CD4-positive, alpha-beta memory T cell (primary cell): ENCODE measurements at regions of chr6 and their contacts with region 1.

Region 1: DNA sequence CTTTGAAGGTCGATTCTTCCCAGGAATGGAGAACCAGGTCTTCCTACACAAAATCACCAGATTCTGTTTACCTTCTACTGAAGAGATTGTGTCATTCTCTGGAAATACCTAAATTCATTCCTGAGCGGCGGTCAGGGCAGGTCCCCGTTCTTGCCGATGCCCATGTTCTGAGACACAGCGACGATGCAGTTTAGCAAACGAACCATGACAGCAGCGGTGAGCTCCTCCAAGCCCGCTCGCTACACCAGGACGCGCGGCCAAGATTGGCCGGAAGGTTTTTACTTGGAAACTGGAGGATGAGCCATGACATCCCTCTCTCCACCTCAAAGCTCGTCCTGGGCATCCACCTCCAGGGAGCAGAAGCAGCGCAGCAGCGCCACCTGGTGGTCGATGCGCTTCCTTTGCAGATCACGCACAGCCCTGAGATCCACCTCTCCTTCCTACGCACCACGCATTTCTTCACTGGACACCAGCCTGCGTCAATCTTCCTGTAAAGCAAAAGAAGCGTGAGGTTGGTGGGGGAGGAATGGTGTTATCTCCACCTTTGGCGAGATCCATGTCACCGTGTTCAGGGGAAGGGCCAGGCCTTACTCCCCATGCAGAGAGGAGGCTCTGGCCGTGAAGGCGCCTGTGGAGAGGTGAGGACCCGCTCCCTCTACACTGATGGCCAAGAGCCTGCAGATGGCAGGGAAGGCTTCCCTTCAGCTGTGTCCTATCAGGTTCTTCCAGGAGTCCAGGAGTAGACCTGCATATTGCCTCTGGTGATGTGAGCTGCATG is 9.9 kb upstream of the HLA-B start:
- DNase-seq: peak; percentile 81 to 88 (median 85)
- H3K4me3 ChIP-seq: peak overlapping the region; percentile 30 to 67
- H3K4me3 Mint-ChIP-seq: peak overlapping the region; percentile 77 to 87 (median 86)
- H3K27ac ChIP-seq: peak overlapping the region; percentile 18
- H3K27ac Mint-ChIP-seq: peak overlapping the region; percentile 9 to 88 (median 77)
- H3K4me1 ChIP-seq: peaks cover 10% of the 10 kb centered on the region
- H3K4me1 Mint-ChIP-seq: peaks cover 10 to 16% (median 12%) of the 10 kb centered on the region in 4 donors
- H3K27me3 ChIP-seq: peaks cover 13% of the 10 kb centered on the region
- H3K27me3 Mint-ChIP-seq: peaks cover 9 to 12% of the 10 kb centered on the region in 2 donors

Region 2: GRCh38 chr6:31114970-31115849 is 251.7 kb before region 1 on chr6:
- CTCF ChIA-PET with region 1: no interaction called
- POLR2A ChIA-PET with region 1: no interaction called
- intact Hi-C with region 1: no loop called
- DNase-seq: peak in 1 of 5 donors; percentile 40
- H3K4me3 ChIP-seq: no peak overlapping the region
- H3K4me3 Mint-ChIP-seq: peak overlapping the region in 2 of 8 donors; percentile 16 to 41
- H3K27ac ChIP-seq: no peak overlapping the region
- H3K27ac Mint-ChIP-seq: peak overlapping the region in 4 of 7 donors; percentile 12 to 80 (median 46)
- H3K4me1 ChIP-seq: peaks cover 5% of the 10 kb centered on the region
- H3K4me1 Mint-ChIP-seq: peaks cover 2 to 8% (median 5%) of the 10 kb centered on the region in 4 donors
- H3K27me3 ChIP-seq: no peaks in the 10 kb centered on the region
- H3K27me3 Mint-ChIP-seq: peaks cover 2 to 3% of the 10 kb centered on the region in 2 donors

Region 3: DNA sequence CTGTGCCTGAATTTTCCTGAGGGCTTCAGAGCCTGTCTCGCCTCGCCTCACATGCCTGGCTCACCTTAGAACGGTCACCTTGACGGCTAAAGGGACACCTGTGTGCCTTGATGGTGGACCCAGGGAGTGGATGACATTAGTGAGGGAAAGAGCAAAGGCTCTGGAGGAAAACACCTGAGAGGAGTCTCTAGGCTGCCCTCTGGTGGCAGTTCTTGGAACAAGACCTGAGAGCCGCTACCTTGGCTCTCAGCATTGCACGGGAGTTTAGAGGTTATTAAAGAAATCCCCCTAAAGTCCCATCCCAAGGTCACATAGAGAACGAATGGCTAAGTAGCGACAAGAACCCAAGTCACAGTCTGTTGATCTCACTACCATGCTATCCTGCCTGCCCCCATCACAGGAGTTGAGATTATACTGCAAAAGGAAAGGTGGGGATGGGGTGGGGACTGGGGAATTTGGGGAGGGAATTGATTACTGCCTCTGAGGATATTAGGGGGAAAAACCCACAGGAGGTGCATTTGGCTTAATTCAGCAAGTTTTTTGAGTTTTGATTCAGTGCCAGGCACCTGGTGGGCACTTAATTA is 238.7 kb before region 1 on chr6:
- CTCF ChIA-PET with region 1: interaction called, 56 read pairs
- POLR2A ChIA-PET with region 1: no interaction called
- intact Hi-C with region 1: no loop called
- DNase-seq: peak; percentile 57 to 70 (median 62)
- H3K4me3 ChIP-seq: no peak overlapping the region
- H3K4me3 Mint-ChIP-seq: no peak overlapping the region
- H3K27ac ChIP-seq: no peak overlapping the region
- H3K27ac Mint-ChIP-seq: peak overlapping the region in 3 of 7 donors; percentile 7 to 52 (median 24)
- H3K4me1 ChIP-seq: peaks cover 3% of the 10 kb centered on the region
- H3K4me1 Mint-ChIP-seq: peaks cover 2 to 8% (median 7%) of the 10 kb centered on the region in 4 donors
- H3K27me3 ChIP-seq: no peaks in the 10 kb centered on the region
- H3K27me3 Mint-ChIP-seq: peaks cover 3 to 6% of the 10 kb centered on the region in 2 donors

Region 4: GRCh38 chr6:31158140-31158862 is 208.6 kb before region 1 on chr6 and contains the start of gene TCF19:
- CTCF ChIA-PET with region 1: interaction called, 13 read pairs
- POLR2A ChIA-PET with region 1: interaction called, 7 read pairs
- intact Hi-C with region 1: no loop called
- DNase-seq: peak; percentile 98 to 99 (median 98)
- H3K4me3 ChIP-seq: peak within 1 kb of the TSS; percentile 59 to 70
- H3K4me3 Mint-ChIP-seq: peak within 1 kb of the TSS; percentile 87 to 95 (median 90)
- H3K27ac ChIP-seq: peak within 1 kb of the TSS; percentile 69
- H3K27ac Mint-ChIP-seq: peak within 1 kb of the TSS; percentile 75 to 95 (median 93)
- H3K4me1 ChIP-seq: peaks cover 22% of the 10 kb centered on the region
- H3K4me1 Mint-ChIP-seq: peaks cover 14 to 34% (median 24%) of the 10 kb centered on the region in 4 donors
- H3K27me3 ChIP-seq: no peaks in the 10 kb centered on the region
- H3K27me3 Mint-ChIP-seq: no peaks in the 10 kb centered on the region
- total RNA-seq, gene TCF19: 9.0 to 9.9 TPM

Region 5: DNA sequence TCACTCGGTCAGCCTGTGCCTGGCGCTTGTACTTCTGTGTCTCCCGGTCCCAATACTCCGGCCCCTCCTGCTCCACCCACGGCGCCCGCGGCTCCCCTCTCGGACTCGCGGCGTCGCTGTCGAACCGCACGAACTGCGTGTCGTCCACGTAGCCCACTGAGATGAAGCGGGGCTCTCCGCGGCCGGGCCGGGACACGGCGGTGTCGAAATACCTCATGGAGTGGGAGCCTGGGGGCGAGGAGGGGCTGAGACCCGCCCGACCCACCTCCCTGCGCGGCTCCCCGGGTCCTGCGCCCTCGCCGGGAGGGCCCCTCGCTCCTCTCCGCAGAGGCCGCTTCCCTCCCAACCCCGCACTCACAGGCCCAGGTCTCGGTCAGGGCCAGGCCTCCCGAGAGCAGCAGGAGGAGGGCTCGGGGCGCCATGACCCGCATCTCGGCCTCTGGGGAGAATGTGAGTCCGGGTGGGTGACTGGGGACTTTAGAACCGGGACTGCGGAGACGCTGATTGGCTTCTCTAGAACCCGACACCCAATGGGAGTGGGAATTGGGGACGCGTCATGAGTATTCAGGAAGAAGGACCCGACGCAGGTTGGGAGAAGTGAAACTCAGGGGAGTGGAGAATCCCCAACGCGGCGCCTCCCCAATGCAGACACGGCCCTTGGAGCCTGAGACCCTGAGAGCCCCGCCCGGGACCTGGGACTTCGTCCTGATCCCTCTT is 95.1 kb before region 1 on chr6 and contains the start of gene HLA-C:
- CTCF ChIA-PET with region 1: interaction called, 6 read pairs
- POLR2A ChIA-PET with region 1: interaction called, 14 read pairs
- intact Hi-C with region 1: loop called (anchors 1 kb)
- DNase-seq: peak; percentile 92 to 98 (median 93)
- H3K4me3 ChIP-seq: peak within 1 kb of the TSS; percentile 88 to 94
- H3K4me3 Mint-ChIP-seq: peak within 1 kb of the TSS; percentile 95 to 100 (median 98)
- H3K27ac ChIP-seq: peak within 1 kb of the TSS; percentile 100
- H3K27ac Mint-ChIP-seq: peak within 1 kb of the TSS; percentile 99 to 100 (median 100)
- H3K4me1 ChIP-seq: peaks cover 51% of the 10 kb centered on the region
- H3K4me1 Mint-ChIP-seq: peaks cover 45 to 77% (median 54%) of the 10 kb centered on the region in 4 donors
- H3K27me3 ChIP-seq: no peaks in the 10 kb centered on the region
- H3K27me3 Mint-ChIP-seq: peaks cover 0 to 2% of the 10 kb centered on the region in 2 donors
- total RNA-seq, gene HLA-C: 1,481 to 1,487 TPM

Region 6: DNA sequence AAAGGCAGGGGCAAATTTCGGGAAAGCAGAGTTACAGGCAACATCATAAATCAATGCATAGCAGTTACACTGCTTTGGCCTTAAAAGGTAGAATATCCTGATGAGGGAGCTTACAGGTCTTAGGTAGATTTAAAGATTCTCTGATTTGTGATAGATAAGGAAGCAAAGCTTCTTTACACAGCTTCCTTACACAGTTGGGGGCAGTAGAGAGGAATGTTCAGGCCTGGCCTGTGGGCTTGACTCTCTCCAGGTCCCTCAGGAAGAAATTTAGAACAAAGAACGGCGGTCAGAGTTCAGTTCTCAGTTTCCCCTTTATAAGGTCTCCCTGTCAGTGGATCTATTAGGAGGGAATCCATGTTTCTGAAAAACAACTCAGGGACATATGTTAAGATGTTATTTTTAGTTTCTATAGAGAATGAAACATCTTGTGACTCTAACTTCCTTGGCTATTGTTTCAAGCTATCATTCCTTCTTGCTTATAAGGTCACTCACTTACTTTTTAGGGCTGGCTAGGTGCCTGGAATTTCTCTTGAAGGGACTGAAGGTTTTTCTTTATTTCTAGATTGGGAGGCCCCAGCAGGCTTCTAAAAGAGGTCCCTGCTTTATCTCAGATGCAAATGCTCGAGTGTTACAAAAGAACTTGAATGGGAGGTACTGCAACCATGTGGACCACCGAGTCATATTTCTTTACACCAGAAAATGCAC is 21.7 kb before region 1 on chr6:
- CTCF ChIA-PET with region 1: interaction called, 10 read pairs
- POLR2A ChIA-PET with region 1: interaction called, 5 read pairs
- intact Hi-C with region 1: no loop called
- DNase-seq: no peak
- H3K4me3 ChIP-seq: no peak overlapping the region
- H3K4me3 Mint-ChIP-seq: no peak overlapping the region
- H3K27ac ChIP-seq: no peak overlapping the region
- H3K27ac Mint-ChIP-seq: no peak overlapping the region
- H3K4me1 ChIP-seq: peaks cover 6% of the 10 kb centered on the region
- H3K4me1 Mint-ChIP-seq: peaks cover 10 to 24% (median 18%) of the 10 kb centered on the region in 4 donors
- H3K27me3 ChIP-seq: no peaks in the 10 kb centered on the region
- H3K27me3 Mint-ChIP-seq: no peaks in the 10 kb centered on the region

Region 7: GRCh38 chr6:32838114-32838958 is 1471.5 kb after region 1 on chr6 and contains the start of gene TAP2:
- CTCF ChIA-PET with region 1: no interaction called
- POLR2A ChIA-PET with region 1: no interaction called
- intact Hi-C with region 1: no loop called
- DNase-seq: peak; percentile 95 to 99 (median 96)
- H3K4me3 ChIP-seq: peak within 1 kb of the TSS; percentile 58 to 74
- H3K4me3 Mint-ChIP-seq: peak within 1 kb of the TSS; percentile 91 to 97 (median 93)
- H3K27ac ChIP-seq: peak within 1 kb of the TSS; percentile 99
- H3K27ac Mint-ChIP-seq: peak within 1 kb of the TSS; percentile 93 to 100 (median 99)
- H3K4me1 ChIP-seq: peaks cover 83% of the 10 kb centered on the region
- H3K4me1 Mint-ChIP-seq: peaks cover 66 to 99% (median 78%) of the 10 kb centered on the region in 4 donors
- H3K27me3 ChIP-seq: no peaks in the 10 kb centered on the region
- H3K27me3 Mint-ChIP-seq: no peaks in the 10 kb centered on the region
- total RNA-seq, gene TAP2: 106 to 112 TPM